Right ventricle myocardium inferior (tissue), 1 donor: ENCODE measurements at regions of chr15 and their contacts with region 1.

Region 1: GRCh38 chr15:74653426-74654123 is 37.9 kb downstream of the CLK3 start:
- DNase-seq: no peak
- ATAC-seq: peak; percentile 53

Region 2: GRCh38 chr15:74156678-74157411 is 496.7 kb before region 1 on chr15:
- intact Hi-C with region 1: no loop called
- DNase-seq: no peak
- ATAC-seq: peak; percentile 82

Region 3: GRCh38 chr15:74589826-74590225 is 63.7 kb before region 1 on chr15:
- intact Hi-C with region 1: no loop called
- DNase-seq: no peak
- ATAC-seq: no peak

Region 4: DNA sequence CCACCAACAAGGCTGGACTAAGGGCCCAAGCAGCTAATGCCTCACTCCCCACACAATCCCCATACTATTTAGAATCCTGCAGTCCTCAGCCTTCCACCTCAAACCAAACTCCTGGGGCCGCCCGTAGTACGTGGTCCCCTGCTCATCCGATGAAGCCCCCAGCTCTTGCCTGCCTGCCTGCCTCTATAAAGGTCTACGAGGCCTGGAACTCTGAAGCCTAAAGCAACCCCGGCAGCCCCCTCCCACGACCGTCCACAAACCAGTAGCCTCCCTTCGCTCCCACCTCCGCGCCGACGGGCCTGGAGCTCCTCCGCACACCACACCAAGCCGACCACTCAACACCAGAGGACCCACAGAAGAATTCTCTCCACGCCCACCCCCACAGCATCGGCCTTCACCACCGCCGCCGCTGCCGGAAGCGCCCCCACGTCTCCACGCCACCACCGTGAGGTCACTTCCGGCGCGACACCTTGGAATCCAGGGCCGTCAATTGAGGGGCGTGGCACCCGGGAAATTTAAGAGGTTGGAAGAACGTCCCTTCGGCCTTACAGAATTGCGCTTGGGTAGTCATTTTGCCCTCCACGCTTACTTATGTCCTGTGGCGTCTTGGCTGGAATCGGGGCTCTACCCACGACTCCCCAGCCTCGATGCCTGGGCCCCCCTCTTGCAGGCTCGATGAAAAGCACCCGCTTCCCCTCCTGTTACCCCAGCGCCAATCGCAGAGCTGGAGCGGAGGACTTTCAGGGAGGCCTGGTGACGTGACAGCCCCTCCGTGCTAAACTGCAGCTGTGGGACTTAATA is 42.2 kb after region 1 on chr15 and contains the start of gene EDC3:
- intact Hi-C with region 1: loop called (anchors 5 kb)
- DNase-seq: peak; percentile 93
- ATAC-seq: peak; percentile 95
- total RNA-seq, gene EDC3: 13.5 TPM

Region 5: DNA sequence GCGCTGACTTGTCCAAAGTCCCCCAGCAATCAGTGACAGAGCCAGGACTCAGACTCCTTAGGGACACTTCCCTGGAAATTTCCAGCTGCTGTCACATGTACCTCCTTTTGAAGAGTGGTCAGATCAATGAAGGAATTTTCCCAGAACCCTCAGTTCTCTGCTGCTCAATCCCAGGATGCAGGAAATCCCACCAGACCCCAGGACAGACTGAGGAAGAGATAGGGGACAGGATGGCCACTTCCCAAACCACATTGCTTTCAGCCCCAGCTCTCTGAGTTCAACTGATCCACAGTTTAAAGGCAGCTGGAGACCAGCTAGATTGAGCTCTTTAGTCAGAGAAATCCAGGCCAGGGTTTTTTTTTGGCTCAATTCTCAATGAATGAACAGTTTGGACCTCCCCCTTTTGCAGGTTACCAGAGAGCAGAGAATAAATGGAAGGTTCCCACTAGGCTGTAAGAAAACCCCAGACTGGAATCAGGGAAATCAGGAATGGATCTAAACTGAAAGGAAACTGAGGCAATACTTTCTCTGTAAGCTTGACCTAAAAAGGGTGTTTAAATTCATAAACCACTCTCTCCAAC is 70.3 kb after region 1 on chr15:
- intact Hi-C with region 1: loop called (anchors 10 kb)
- DNase-seq: no peak
- ATAC-seq: no peak